Posterior vena cava (tissue), 2 donors: ENCODE measurements at regions of chr14 and their contacts with region 1.

Region 1: DNA sequence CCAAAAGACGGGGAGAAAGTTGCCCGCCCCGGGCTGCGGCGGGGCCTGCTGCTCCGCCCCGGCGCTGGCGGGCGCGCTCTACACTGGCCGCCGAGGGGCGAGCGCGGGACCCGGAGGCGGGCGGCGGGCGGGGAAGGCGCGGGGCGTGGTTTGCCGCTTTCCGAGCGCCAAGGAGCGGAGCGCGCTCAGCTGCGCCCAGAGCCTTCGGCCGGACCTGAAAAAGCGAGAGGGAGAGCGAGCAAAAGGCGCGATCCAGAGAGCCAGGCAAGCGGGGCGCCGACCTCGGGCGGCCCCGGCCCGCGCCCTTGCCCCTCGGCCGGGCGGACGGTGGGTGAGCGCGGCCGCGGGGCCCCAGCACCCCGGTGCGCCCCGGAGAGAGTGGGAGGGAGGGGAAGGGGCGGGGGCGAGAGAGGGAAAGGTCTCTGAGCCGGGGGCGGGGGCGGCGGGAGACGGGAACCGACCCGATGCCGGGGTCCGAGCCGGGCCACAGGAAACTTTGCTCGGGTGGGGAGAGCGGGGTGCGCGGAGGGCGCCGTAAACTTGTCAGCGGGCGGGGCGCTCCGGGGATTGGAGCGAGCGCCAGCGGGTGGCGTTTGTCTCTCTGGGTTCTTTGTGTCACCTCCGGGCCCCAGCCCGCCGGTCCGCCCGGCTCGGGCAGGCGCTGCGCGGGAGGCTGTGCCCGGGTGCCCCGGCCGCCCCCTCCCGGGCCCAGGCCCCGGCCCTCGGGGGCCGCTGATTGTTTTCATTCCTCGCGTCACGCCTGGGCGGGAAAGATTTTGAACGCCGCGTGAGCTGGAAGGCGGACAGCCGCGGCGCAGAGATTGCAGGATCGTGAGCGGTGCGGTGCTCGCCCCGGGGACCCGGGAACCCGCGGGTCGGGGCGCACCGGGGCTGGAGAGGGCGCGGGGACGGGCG is at the start of gene SYNE2:
- DNase-seq: peak; percentile 91
- total RNA-seq, gene SYNE2: 63.4 to 83.9 TPM

Region 2: GRCh38 chr14:63867933-63868921 is 15.2 kb after region 1 on chr14:
- intact Hi-C with region 1: no loop called
- DNase-seq: no peak

Region 3: DNA sequence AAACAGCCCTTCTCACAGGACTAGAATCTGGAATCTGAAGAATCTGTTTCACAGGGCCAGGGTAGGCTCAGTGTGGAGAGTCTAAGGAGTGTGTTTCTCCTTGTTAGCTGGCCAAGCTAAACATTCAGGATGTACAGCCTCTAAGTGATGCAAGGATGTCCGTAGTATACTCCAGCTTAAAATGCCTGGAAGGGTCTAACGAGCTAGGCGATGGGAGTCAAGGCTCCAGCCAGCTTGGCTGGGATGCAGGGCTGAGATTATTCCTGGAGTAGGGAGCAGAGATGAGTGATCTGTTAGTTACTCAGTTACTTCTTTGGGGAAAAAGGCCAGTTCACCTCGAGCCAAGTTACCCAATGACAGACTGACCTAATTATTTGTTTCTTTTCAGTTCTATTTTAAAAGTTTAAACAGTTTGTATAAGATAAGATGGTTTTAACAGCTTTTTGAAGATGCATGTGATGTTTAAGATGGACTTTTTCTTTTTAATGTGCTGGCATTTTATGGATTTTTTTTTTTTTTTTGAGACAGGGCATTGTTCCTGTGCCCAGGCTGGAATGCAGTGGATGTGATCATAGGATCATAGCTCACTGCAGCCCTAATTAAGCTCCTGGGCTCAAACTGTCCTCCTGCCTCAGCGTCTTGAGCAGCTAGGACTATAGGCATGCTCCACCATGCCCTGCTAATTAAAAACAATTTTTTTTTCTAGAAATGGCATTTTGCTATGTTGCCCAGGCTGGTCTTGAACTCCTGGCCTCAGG is 40.8 kb after region 1 on chr14:
- intact Hi-C with region 1: loop called in 1 of 2 experiments (anchors 5 kb)
- DNase-seq: peak; percentile 91